Activated naive CD4-positive, alpha-beta T cell treated with anti-CD3 and anti-CD28 coated beads for 36 hours (primary cell): ENCODE measurements at regions of chr22 and their contacts with region 1.

Region 1: DNA sequence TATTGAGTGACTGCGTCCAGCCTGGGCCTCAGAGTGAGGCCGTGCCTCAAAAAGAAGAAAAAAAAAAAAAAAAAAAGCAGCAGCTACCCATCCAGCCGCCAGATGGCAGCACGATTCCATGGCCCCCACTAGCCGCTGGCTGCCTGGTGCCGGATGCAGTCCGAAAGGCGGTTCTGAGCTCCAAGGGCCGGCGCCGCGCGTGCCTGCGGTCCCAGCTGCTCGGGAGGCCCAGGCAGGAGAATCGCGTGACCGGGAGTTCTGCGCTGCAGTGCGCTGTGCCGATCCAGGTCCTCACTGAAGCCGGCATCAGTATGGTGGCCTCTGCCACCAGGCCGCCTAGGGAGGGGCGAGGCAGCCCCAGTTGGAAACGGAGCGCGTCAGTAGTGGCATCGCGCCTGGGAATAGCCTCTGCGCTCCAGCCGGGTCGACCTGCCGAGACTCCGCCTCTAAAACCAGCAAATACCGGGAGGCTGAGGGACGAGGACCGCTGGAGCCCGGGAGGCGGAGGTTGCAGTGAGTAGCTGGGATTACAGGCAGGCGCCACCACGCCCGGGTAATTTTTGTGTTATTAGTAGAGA is 19.3 kb downstream of the SCARF2 start:
- DNase-seq: peak; percentile 70
- H3K4me3 Mint-ChIP-seq: no peak overlapping the region
- H3K27ac Mint-ChIP-seq: no peak overlapping the region
- H3K4me1 Mint-ChIP-seq: no peaks in the 10 kb centered on the region
- H3K27me3 Mint-ChIP-seq: peaks cover under 1% of the 10 kb centered on the region

Region 2: DNA sequence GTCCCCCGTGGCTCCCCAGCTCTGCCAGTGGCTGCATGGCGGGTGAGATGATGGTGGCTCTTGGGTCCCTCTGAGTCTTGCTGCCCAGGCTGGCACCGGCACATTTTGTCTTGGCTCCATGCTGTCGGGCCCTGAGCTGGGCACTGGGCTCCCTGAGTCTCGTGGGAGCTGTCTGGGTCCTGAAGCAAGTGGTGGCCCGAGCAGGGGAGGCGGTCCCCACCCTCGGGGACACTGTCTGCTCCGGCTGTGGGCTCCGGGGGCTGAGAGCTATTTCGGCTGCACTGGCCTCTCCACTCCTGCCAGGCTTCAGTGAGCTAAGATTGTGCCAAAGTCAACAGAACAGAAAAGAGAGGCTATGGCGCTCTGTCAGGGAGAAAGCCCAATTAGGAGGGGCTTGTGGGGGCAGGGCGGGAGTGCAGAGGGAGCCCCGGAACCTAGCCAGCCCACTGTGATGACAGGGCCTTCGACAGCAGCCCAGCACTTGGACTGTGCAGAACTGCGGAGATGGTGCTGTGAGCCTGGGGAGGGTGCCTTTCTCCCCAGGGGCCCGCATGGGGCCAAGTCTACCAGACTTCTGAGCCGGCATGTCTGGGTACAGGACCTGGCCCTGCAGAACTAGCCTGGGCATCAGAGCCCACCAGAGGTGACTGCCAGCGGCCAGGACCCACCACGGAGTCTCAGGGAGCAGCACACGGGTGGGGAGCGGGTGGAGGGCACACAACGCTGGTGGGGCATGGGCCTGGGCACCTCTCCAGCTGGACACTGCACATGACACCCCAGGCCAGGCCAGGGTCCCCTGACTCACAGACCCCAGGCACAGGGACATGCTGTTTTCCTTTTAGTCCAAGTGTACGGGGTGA is 188.2 kb before region 1 on chr22:
- CTCF ChIA-PET with region 1: no interaction called
- intact Hi-C with region 1: no loop called
- DNase-seq: no peak
- H3K4me3 Mint-ChIP-seq: no peak overlapping the region
- H3K27ac Mint-ChIP-seq: no peak overlapping the region
- H3K4me1 Mint-ChIP-seq: no peaks in the 10 kb centered on the region
- H3K27me3 Mint-ChIP-seq: no peaks in the 10 kb centered on the region

Region 3: DNA sequence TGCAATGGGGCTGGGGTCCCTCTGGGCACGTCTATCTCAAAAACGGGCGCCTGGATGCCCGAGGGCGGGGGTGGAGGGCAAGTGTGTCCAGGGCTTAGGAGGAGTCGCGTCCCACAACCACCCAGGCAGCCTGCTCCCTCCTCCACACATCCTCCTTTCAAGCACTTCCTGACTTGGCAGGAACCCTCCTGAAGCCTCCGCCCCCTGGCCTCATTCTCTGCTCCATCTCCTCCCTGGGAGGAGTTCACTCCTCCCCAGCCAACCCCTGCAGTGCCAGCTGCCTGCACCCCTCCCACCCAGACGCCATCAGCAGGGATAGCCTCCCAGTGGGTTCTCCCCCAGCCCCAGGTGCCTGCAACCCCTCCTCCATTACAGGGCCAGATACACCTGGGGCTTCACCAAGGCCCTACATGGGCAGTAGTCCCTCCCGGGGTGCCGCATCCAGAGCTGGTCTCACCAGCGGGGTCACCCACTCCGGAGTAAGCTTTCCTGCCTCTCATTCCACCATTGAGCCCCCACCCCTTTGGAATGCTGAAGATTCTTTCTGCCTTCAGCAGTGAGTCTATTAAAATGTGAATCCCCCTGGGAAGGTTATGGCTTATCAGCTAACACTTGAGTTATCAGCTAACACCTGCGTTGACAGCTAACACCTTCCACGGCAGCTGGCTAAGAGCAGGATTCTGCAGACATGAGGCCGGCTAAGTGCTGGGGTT is 174.6 kb before region 1 on chr22:
- CTCF ChIA-PET with region 1: no interaction called
- intact Hi-C with region 1: no loop called
- DNase-seq: peak; percentile 83
- H3K4me3 Mint-ChIP-seq: peak overlapping the region; percentile 57
- H3K27ac Mint-ChIP-seq: peak overlapping the region; percentile 79
- H3K4me1 Mint-ChIP-seq: peaks cover 36% of the 10 kb centered on the region
- H3K27me3 Mint-ChIP-seq: no peaks in the 10 kb centered on the region

Region 4: GRCh38 chr22:20430720-20431510 is 12.6 kb after region 1 on chr22:
- CTCF ChIA-PET with region 1: interaction called, 15 read pairs
- intact Hi-C with region 1: no loop called
- DNase-seq: peak; percentile 59
- H3K4me3 Mint-ChIP-seq: peak overlapping the region; percentile 63
- H3K27ac Mint-ChIP-seq: no peak overlapping the region
- H3K4me1 Mint-ChIP-seq: peaks cover 18% of the 10 kb centered on the region
- H3K27me3 Mint-ChIP-seq: peaks cover 58% of the 10 kb centered on the region

Region 5: GRCh38 chr22:20456064-20456721 is 37.9 kb after region 1 on chr22:
- CTCF ChIA-PET with region 1: interaction called, 64 read pairs
- intact Hi-C with region 1: loop called (anchors 1 kb)
- DNase-seq: peak; percentile 84
- H3K4me3 Mint-ChIP-seq: no peak overlapping the region
- H3K27ac Mint-ChIP-seq: no peak overlapping the region
- H3K4me1 Mint-ChIP-seq: peaks cover 23% of the 10 kb centered on the region
- H3K27me3 Mint-ChIP-seq: no peaks in the 10 kb centered on the region

Region 6: DNA sequence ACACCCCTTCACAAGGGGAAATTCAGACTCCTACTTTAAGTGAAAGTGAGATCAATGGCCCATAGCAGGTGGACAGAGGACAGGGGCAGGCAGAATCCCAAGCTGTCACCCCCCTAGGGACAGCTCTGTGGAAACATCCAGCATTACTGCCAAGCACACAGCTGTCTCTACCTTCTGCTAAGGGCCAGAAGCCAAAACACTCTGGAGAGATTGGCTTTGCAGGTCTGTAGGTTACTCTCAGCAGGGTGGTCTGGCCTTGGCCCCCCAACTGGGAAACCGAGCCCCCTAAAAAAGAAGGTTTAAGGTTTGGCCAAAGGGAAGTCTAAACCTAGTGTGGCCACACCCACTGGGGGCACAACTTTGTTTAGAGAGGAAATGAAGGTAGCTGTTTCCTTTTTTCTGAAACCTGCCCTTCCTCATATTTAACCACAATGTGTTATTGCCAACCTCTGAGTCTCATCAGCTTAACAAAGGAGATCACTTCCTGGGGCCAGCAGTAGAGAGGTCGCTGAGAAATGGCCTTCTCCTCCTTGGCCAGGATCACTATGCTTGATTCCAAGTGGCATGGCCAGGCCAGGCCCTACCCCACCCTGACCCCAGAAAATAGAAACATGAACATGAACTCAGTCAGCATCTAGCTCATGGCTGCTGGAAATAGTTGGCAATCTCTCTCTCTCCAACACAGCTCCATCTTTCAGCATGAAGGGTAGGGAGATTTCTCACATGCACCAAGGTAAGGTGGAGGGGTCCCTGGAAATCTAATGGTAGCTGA is 45.2 kb after region 1 on chr22:
- CTCF ChIA-PET with region 1: interaction called, 16 read pairs
- intact Hi-C with region 1: no loop called
- DNase-seq: peak; percentile 34
- H3K4me3 Mint-ChIP-seq: peak overlapping the region; percentile 16
- H3K27ac Mint-ChIP-seq: peak overlapping the region; percentile 87
- H3K4me1 Mint-ChIP-seq: peaks cover 53% of the 10 kb centered on the region
- H3K27me3 Mint-ChIP-seq: no peaks in the 10 kb centered on the region

Region 7: GRCh38 chr22:20741634-20742581 is 323.6 kb after region 1 on chr22:
- CTCF ChIA-PET with region 1: no interaction called
- intact Hi-C with region 1: loop called (anchors 5 kb)
- DNase-seq: peak; percentile 63
- H3K4me3 Mint-ChIP-seq: no peak overlapping the region
- H3K27ac Mint-ChIP-seq: no peak overlapping the region
- H3K4me1 Mint-ChIP-seq: peaks cover 1% of the 10 kb centered on the region
- H3K27me3 Mint-ChIP-seq: no peaks in the 10 kb centered on the region